ENCODE measurements at regions of chr3 and their contacts with region 1.

Region 1: GRCh38 chr3:27271890-27272289 is 97.3 kb downstream of the NEK10 start:
- DNase-seq: no peak
- H3K4me3 ChIP-seq: no peak overlapping the region
- H3K27ac ChIP-seq: no peak overlapping the region
- H3K4me1 ChIP-seq: no peaks in the 10 kb centered on the region
- H3K27me3 ChIP-seq: no peaks in the 10 kb centered on the region
- CTCF ChIP-seq: no peak

Region 2: DNA sequence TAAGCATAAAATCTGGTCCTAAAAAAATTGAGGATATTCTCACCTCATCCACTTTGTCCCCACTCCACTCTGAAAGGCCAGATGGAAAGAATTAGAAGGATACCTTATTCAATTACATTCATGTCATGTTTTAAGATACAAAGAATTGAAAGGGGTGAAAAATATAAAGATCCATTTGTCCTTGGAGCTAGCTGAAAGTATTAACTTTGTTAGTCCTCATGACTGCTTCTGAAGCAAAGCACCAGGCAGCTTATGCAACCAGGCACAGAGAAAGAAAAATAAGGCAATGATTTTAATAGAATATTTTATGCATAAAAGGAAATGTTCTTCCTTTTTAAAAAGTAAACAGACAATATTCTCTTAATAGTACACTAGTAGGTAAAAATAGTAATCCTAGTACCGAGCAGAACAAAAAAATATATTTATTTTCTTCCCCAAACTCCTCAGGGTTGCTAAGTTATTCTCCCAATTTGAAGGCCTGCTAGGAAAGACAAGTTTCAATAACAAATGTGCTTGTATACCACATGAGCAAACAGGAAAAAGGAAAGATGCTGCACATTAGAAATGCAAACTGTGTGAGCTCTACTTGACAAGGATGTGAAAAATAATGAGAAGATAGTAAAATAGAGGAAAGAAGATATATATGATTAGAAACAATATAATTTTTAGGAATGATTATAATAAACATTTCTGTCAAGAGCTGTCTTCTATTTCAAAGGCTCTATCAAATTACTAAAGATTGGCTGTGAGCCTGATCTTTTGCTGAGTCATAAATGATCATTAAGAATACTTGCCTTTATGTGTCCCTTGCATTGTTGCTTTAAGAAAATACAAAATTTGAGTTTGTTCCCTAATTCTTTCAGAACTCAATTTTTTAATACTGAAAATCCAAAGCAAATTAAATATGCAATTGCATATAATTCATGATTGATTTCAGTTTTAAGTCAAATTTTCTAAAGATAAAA is 77.1 kb before region 1 on chr3:
- CTCF ChIA-PET with region 1: no interaction called
- dilution Hi-C with region 1: loop called (anchors 5 kb)
- in situ Hi-C with region 1: no loop called
- intact Hi-C with region 1: no loop called
- DNase-seq: no peak
- H3K4me3 ChIP-seq: no peak overlapping the region
- H3K27ac ChIP-seq: no peak overlapping the region
- H3K4me1 ChIP-seq: no peaks in the 10 kb centered on the region
- H3K27me3 ChIP-seq: no peaks in the 10 kb centered on the region
- CTCF ChIP-seq: no peak